Right lobe of liver (tissue), 6 donors: ENCODE measurements at regions of chr6 and their contacts with region 1.

Region 1: GRCh38 chr6:36487698-36488097 is 44.9 kb downstream of the KCTD20 start:
- DNase-seq: no peak
- ATAC-seq: no peak
- H3K4me3 ChIP-seq: no peak overlapping the region
- H3K27ac ChIP-seq: no peak overlapping the region
- H3K4me1 ChIP-seq: no peaks in the 10 kb centered on the region
- H3K27me3 ChIP-seq: no peaks in the 10 kb centered on the region
- CTCF ChIP-seq: no peak
- POLR2A ChIP-seq: no peak

Region 2: DNA sequence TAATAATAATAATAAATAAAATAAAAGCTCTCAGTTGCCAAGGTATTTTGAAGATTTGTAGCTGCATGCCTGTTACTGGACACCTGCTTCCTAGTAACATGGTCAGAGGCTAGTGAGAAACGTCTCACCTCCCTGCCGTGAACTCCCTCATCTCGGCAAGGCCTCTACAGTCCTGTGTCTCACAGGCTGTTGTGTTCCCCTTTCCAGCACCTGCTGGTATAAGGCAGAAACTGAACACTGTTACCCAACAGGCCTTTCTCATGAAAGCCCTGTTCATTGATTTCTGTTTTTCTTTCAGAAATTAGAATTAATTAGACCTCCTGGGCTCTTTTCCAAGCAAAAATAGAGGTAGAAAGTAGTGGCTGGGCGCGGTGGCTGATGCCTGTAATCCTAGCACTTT is 88.9 kb after region 1 on chr6:
- intact Hi-C with region 1: loop called in 1 of 2 experiments (anchors 10 kb)
- DNase-seq: no peak
- ATAC-seq: no peak
- H3K4me3 ChIP-seq: no peak overlapping the region
- H3K27ac ChIP-seq: no peak overlapping the region
- H3K4me1 ChIP-seq: peaks cover 0 to 5% (median 0%) of the 10 kb centered on the region in 4 donors
- H3K27me3 ChIP-seq: no peaks in the 10 kb centered on the region
- CTCF ChIP-seq: no peak
- POLR2A ChIP-seq: no peak

Region 3: GRCh38 chr6:36701401-36701991 is 213.8 kb after region 1 on chr6:
- intact Hi-C with region 1: no loop called
- DNase-seq: peak in 1 of 3 donors; percentile 43
- ATAC-seq: peak in 3 of 4 donors; percentile 48 to 68 (median 64)
- H3K4me3 ChIP-seq: no peak overlapping the region
- H3K27ac ChIP-seq: no peak overlapping the region
- H3K4me1 ChIP-seq: no peaks in the 10 kb centered on the region
- H3K27me3 ChIP-seq: peaks cover 0 to 4% of the 10 kb centered on the region in 2 donors
- CTCF ChIP-seq: peak in 3 of 4 donors; percentile 4 to 18 (median 15)
- POLR2A ChIP-seq: no peak